ENCODE measurements at regions of chr16 and their contacts with region 1.

Region 1: GRCh38 chr16:89860747-89861304 is 12.6 kb upstream of the TCF25 start:
- DNase-seq: peak; percentile 58 to 91
- ATAC-seq: peak; percentile 93 to 96
- H3K4me3 ChIP-seq: no peak overlapping the region
- H3K27ac ChIP-seq: no peak overlapping the region
- H3K4me1 ChIP-seq: peaks cover 4% of the 10 kb centered on the region; the same call in 1 of the 3 replicates
- CTCF ChIP-seq: peak; percentile 88
- EP300 ChIP-seq: no peak
- POLR2A ChIP-seq: no peak
- RAD21 ChIP-seq: peak; percentile 93

Region 2: DNA sequence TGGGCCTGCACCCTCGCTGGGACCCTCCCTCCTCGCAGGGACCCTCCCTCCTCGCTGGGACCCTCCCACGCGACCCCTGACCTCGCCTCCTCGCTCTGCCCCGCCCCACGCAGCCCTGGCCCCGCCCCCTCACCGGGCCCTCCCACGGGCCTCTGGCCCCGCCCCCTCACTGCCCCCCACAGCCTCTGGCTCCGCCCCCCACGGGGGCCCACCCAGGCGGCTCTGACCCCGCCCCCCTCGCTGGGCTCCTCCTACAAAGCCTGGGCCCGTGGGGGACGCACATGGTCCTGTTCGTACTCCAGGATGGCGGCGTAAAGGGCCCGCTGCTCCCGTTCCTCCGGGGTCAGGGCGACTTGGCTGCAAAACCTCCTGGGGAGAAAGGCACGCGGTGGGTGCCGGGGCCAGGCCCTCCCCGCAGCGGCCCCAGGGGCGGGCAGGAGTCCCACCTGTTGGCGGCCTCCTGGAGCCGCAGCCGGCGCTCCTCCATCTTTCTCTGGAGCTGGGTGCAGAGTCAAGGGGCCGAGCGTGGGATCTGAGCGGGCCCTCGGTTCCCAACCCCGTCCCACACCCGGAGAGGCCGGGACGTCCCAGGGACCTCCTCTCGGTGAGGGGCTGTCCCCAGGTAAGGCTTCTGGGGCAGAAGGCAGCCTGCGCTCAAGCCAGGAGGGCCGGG is 149.1 kb before region 1 on chr16:
- CTCF ChIA-PET with region 1: interaction called, 23 read pairs
- POLR2A ChIA-PET with region 1: no interaction called
- DNase-seq: peak; percentile 81 to 94
- ATAC-seq: peak; percentile 57 to 82
- H3K4me3 ChIP-seq: peak overlapping the region; percentile 87
- H3K27ac ChIP-seq: peak overlapping the region; percentile 86 to 89
- H3K4me1 ChIP-seq: peaks cover 9% of the 10 kb centered on the region; the same call in 2 of the 3 replicates
- CTCF ChIP-seq: no peak
- EP300 ChIP-seq: no peak
- POLR2A ChIP-seq: peak; percentile 81
- RAD21 ChIP-seq: no peak

Region 3: DNA sequence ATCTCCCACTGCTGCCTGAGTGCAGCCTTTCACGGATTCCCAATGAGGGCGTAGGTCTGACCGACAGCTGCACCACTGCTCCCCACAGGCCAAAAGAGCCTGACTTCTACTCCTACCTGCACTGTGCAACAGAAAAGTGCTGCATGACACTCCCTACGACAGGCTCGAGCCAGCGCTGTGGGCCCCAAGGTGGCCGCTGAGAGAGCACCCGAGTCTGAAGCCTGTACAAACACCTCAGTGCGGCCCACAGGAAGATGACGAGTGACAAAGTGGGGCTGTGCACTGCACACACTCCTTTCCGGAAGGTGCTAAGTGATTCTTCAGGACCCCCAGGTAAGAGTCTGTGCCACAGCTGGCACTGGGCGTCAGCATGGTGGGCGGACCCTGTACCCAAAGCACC is 85.6 kb before region 1 on chr16:
- CTCF ChIA-PET with region 1: interaction called, 27 read pairs
- POLR2A ChIA-PET with region 1: no interaction called
- DNase-seq: no peak
- ATAC-seq: no peak
- H3K4me3 ChIP-seq: no peak overlapping the region
- H3K27ac ChIP-seq: no peak overlapping the region
- H3K4me1 ChIP-seq: no peaks in the 10 kb centered on the region
- CTCF ChIP-seq: no peak
- EP300 ChIP-seq: no peak
- POLR2A ChIP-seq: no peak
- RAD21 ChIP-seq: no peak

Region 4: GRCh38 chr16:89815639-89816348 is 45.0 kb before region 1 on chr16:
- CTCF ChIA-PET with region 1: interaction called, 13 read pairs
- POLR2A ChIA-PET with region 1: no interaction called
- DNase-seq: peak in 1 of 2 experiments; percentile 38
- ATAC-seq: peak; percentile 12 to 55
- H3K4me3 ChIP-seq: peak overlapping the region; percentile 92
- H3K27ac ChIP-seq: peak overlapping the region; percentile 93 to 98
- H3K4me1 ChIP-seq: peaks cover 4% of the 10 kb centered on the region; the same call in 1 of the 3 replicates
- CTCF ChIP-seq: no peak
- EP300 ChIP-seq: no peak
- POLR2A ChIP-seq: no peak
- RAD21 ChIP-seq: no peak

Region 5: GRCh38 chr16:89833664-89834255 is 27.1 kb before region 1 on chr16:
- CTCF ChIA-PET with region 1: interaction called, 25 read pairs
- POLR2A ChIA-PET with region 1: no interaction called
- DNase-seq: peak in 1 of 2 experiments; percentile 51
- ATAC-seq: no peak
- H3K4me3 ChIP-seq: no peak overlapping the region
- H3K27ac ChIP-seq: no peak overlapping the region
- H3K4me1 ChIP-seq: peaks cover 20% of the 10 kb centered on the region
- CTCF ChIP-seq: no peak
- EP300 ChIP-seq: no peak
- POLR2A ChIP-seq: no peak
- RAD21 ChIP-seq: no peak

Region 6: GRCh38 chr16:89873972-89874689 is 13.3 kb after region 1 on chr16:
- CTCF ChIA-PET with region 1: interaction called, 79 read pairs
- POLR2A ChIA-PET with region 1: interaction called, 17 read pairs
- DNase-seq: peak; percentile 77 to 98
- ATAC-seq: peak; percentile 62 to 82
- H3K4me3 ChIP-seq: peak overlapping the region; percentile 85
- H3K27ac ChIP-seq: peak overlapping the region; percentile 96 to 99
- H3K4me1 ChIP-seq: peaks cover 12% of the 10 kb centered on the region; the same call in 1 of the 3 replicates
- CTCF ChIP-seq: no peak
- EP300 ChIP-seq: no peak
- POLR2A ChIP-seq: no peak
- RAD21 ChIP-seq: no peak

Region 7: GRCh38 chr16:90008708-90009535 is 148.1 kb after region 1 on chr16:
- CTCF ChIA-PET with region 1: no interaction called
- POLR2A ChIA-PET with region 1: no interaction called
- DNase-seq: no peak
- ATAC-seq: no peak; a peak in 2 of 6 replicates
- H3K4me3 ChIP-seq: no peak overlapping the region
- H3K27ac ChIP-seq: no peak overlapping the region
- H3K4me1 ChIP-seq: no peaks in the 10 kb centered on the region
- CTCF ChIP-seq: no peak
- EP300 ChIP-seq: no peak
- POLR2A ChIP-seq: no peak
- RAD21 ChIP-seq: no peak